HEK293 (cell line): ENCODE measurements at regions of chr5 and their contacts with region 1.

Region 1: GRCh38 chr5:68287976-68288706 is 72.6 kb downstream of the PIK3R1 start:
- H3K4me3 ChIP-seq: peak overlapping the region; percentile 17
- H3K27ac ChIP-seq: peak overlapping the region; percentile 32
- H3K4me1 ChIP-seq: peaks cover 12% of the 10 kb centered on the region
- CTCF ChIP-seq: no peak

Region 2: DNA sequence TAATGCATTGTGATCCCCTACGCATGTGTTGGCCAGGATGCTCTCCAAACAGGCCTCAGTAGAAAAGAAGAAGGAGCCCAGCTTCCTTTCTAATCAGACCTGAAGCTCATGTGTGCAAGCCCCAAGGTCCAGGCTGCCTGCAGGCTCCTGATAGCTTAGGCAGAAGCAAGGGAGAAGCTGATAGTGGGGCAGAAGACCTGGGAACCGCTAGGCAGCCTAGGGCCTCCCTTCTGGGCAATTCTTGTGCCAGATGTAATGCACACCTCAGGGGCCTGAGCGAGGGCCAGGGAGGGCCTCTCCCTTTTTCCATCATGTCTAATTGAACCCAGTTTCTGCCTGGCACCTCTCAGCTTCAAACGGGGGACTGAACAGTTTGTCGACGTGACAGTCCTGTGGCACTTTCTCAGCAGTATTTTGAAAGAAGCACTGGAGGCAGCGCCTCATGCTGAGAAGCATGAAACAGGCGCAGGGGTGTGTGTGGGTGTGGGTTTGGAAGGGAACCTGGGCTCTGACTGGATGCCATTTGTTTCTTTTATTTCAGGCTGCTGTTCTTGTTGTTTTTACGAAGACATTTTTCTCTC is 140.2 kb after region 1 on chr5:
- CTCF ChIA-PET with region 1: interaction called, 12 read pairs
- POLR2A ChIA-PET with region 1: no interaction called
- H3K4me3 ChIP-seq: no peak overlapping the region
- H3K27ac ChIP-seq: no peak overlapping the region
- H3K4me1 ChIP-seq: no peaks in the 10 kb centered on the region
- CTCF ChIP-seq: no peak

Region 3: DNA sequence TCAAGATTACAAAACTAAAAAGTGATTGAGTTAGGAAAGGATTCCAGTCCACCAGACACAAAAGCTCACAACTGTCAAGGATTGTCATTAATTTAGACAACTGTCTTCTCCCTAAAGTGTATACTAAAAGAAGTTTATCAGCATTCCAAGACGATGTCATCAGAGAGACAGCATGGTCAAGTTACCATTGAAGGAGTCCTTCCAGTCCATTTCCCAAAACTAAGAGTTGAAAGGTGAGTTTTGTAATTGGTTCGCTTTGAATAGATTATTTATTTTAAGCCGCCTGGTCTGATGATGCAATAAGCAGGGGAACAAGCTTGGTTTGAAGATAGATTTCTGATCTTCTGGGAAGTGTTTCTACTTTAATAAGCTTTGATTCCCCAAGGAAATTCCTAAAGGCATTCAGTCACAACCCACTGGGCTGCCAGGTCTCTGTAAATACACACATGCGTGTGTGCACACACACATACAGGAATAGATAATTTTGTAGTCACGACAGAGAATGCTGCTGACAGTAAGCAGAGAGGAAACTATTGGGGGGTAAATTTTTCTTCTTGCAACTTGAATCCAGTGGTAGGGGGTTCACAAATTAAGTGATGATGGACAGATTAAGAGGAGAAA is 162.2 kb after region 1 on chr5:
- CTCF ChIA-PET with region 1: interaction called, 17 read pairs
- POLR2A ChIA-PET with region 1: no interaction called
- H3K4me3 ChIP-seq: no peak overlapping the region
- H3K27ac ChIP-seq: no peak overlapping the region
- H3K4me1 ChIP-seq: no peaks in the 10 kb centered on the region
- CTCF ChIP-seq: no peak

Region 4: GRCh38 chr5:68460147-68460798 is 172.1 kb after region 1 on chr5:
- CTCF ChIA-PET with region 1: interaction called, 36 read pairs
- POLR2A ChIA-PET with region 1: no interaction called
- H3K4me3 ChIP-seq: no peak overlapping the region
- H3K27ac ChIP-seq: no peak overlapping the region; the same call in 1 of the 2 replicates
- H3K4me1 ChIP-seq: peaks cover 14% of the 10 kb centered on the region
- CTCF ChIP-seq: no peak

Region 5: DNA sequence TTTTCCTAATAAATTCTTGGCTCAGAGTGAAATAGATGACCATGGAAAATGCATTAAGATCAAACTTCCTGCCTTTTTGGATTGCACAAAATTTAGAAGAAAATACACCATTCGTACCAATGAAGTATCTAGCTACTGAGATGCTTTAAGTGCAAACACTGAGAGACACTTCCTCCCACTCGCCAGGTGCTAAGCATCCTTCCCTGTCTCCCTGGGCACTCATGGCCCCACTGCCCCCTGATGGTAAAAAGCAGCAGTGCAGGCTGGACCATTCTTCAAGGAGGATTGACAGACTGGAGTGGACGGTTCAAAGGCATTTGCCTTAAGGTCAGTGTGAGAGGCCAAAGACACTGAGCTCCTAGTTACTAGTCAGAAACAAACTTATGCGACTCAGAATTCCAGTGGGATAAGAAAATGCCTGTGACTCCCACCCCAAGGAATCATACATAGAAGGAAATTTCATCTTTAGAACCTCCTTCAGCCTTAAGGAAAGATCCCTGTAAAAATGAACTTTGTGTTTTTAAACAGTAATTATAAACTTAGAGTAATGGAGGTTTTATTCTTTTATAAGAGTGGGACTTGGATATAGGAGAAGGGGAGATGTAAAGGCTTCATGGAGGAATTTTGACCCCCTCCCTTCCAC is 719.7 kb after region 1 on chr5:
- CTCF ChIA-PET with region 1: interaction called, 10 read pairs
- POLR2A ChIA-PET with region 1: no interaction called
- H3K4me3 ChIP-seq: no peak overlapping the region
- H3K27ac ChIP-seq: no peak overlapping the region
- H3K4me1 ChIP-seq: 0 out of 2 replicates have a peak, but pooled peaks cover 2% of the 10 kb centered on the region
- CTCF ChIP-seq: peak; percentile 67; the same call in 1 of the 2 replicates